Breast epithelium (tissue), 4 donors: ENCODE measurements at regions of chr1 and their contacts with region 1.

Region 1: DNA sequence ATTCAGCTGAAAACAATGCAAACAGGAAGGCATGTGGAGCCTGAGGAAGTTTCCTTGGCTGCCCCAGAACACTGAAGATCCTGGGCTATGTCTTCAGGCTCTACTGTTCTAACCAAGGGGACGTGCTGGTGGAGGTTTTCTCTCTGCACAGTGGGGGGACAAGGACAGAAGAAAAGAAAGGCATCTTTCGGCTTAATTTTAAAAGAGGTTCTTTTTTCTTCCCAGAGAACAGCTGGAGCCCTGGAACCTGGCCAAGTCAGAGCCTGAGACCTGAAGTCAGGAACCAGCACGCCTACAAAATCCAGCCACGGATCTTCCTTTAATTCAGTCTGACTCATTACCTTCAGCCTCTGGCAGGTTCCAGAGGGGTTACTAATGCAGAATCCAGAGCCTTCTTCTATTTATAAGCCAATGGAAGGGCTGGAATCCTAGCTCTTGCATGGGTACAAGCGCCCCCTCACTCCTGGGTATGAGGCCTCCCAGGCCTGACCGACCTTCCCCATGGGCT is 19.8 kb downstream of the CTNNBIP1 start:
- DNase-seq: peak in 1 of 2 donors; percentile 58
- H3K4me3 ChIP-seq: no peak overlapping the region
- H3K27ac ChIP-seq: peak overlapping the region; percentile 67 to 68
- H3K4me1 ChIP-seq: peaks cover 6 to 17% of the 10 kb centered on the region in 2 donors
- H3K27me3 ChIP-seq: no peaks in the 10 kb centered on the region
- CTCF ChIP-seq: no peak
- POLR2A ChIP-seq: no peak

Region 2: DNA sequence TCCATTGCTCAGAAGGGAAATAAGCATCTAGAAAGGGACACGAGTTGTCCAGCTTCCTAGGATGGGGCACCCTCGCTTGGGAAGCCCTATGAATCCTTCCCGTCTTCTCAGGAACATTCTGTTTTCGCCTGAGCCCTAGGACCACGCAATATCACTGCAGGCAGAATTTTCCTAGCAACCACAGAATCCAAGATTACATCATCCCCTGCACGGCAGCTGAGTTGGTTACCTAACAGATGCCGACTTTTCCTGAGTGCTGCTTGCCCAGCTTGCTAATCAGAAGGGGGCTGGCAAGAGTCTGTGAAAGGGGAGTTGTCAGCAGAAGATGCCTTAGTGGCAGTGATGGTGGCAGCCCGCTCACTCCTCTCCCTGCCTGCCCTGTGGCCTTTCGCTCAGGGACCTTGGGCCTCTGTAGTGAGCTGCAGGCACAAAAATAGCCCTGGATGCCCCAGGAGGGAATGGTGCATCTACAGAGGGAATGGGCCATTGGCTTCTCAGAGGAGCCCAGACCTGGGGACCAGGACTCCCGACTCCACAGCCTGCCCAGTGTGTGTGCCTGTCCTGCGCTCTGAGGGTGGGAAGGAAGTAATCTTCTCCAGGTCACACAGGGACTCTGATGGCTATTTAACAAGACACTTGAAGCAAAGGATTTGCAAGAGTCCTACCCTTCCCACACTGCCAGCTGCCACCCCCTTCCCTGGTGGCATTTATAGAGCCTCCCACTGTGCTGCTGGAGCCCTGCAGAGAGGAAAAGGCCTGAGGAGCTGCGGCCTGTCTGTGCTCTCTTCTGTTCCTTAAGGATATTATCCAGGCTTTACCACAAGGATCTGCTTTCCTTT is 37.6 kb before region 1 on chr1:
- intact Hi-C with region 1: loop called (anchors 2 kb)
- DNase-seq: peak in 1 of 2 donors; percentile 80
- H3K4me3 ChIP-seq: no peak overlapping the region
- H3K27ac ChIP-seq: peak overlapping the region; percentile 82 to 92
- H3K4me1 ChIP-seq: no peaks in the 10 kb centered on the region
- H3K27me3 ChIP-seq: no peaks in the 10 kb centered on the region
- CTCF ChIP-seq: no peak
- POLR2A ChIP-seq: no peak

Region 3: GRCh38 chr1:9957726-9958125 is 67.4 kb after region 1 on chr1:
- intact Hi-C with region 1: loop called (anchors 2 kb)
- DNase-seq: no peak
- H3K4me3 ChIP-seq: no peak overlapping the region
- H3K27ac ChIP-seq: no peak overlapping the region
- H3K4me1 ChIP-seq: no peaks in the 10 kb centered on the region
- H3K27me3 ChIP-seq: no peaks in the 10 kb centered on the region
- CTCF ChIP-seq: no peak
- POLR2A ChIP-seq: no peak